Activated CD4-positive, alpha-beta memory T cell treated with anti-CD3 and anti-CD28 coated beads for 36 hours (primary cell): ENCODE measurements at regions of chr2 and their contacts with region 1.

Region 1: GRCh38 chr2:55718165-55719008 is 24.7 kb upstream of the PNPT1 start:
- DNase-seq: peak; percentile 45
- H3K4me3 Mint-ChIP-seq: no peak overlapping the region
- H3K27ac Mint-ChIP-seq: no peak overlapping the region
- H3K4me1 Mint-ChIP-seq: no peaks in the 10 kb centered on the region
- H3K27me3 Mint-ChIP-seq: no peaks in the 10 kb centered on the region

Region 2: DNA sequence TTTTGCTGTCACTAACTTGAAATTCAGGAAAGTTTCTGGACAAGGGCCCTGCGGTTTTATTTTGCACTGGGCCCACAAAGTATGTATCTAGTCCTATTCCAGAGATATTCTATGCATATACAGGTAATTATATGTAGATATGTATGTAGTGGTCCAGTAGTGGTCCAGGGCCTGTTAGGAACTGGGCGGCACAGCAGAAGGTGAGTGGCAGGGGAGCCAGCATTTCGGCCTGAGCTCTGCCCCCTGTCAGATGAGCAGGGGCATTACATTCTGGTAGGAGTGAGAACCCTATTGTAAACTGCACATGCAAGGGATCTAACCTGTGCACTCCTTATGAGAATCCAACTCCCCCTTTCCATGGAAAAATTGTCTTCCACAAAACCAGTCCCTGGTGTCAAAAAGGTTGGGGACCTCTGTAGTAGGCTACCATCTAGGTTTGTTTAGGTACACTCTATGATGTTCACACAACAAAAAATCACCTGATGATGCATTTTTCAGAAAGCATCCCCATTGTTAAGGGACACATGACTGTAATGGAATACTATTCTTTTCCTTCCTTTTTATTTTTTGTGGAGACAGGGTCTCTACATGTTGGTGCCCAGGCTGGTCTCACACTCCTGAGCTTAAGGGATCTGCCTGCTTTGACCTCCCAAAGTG is 98.1 kb before region 1 on chr2:
- CTCF ChIA-PET with region 1: no interaction called
- POLR2A ChIA-PET with region 1: no interaction called
- intact Hi-C with region 1: no loop called
- DNase-seq: peak; percentile 32
- H3K4me3 Mint-ChIP-seq: peak overlapping the region; percentile 54
- H3K27ac Mint-ChIP-seq: no peak overlapping the region
- H3K4me1 Mint-ChIP-seq: peaks cover 50% of the 10 kb centered on the region
- H3K27me3 Mint-ChIP-seq: no peaks in the 10 kb centered on the region

Region 3: GRCh38 chr2:55827467-55828254 is 109.3 kb after region 1 on chr2:
- CTCF ChIA-PET with region 1: no interaction called
- POLR2A ChIA-PET with region 1: no interaction called
- intact Hi-C with region 1: no loop called
- DNase-seq: no peak
- H3K4me3 Mint-ChIP-seq: no peak overlapping the region
- H3K27ac Mint-ChIP-seq: no peak overlapping the region
- H3K4me1 Mint-ChIP-seq: no peaks in the 10 kb centered on the region
- H3K27me3 Mint-ChIP-seq: no peaks in the 10 kb centered on the region

Region 4: DNA sequence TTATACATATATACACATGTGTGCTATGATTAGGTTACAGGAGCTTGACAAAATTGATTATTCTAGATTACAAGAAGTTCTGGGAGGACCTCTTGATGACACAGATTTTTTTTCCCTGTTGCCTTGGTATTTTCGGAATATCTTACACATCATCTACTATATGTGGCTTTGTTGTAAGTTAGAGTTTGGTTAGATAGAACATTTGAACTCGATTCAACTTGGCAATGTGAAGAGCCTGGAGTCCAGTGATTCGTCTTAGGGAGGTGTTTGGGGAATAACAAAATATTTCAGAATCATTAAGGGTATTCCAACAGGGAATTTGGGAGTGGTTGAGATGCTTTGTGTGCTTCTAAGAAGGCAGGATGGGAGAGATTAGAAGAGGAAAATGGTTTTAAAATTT is 244.5 kb after region 1 on chr2:
- CTCF ChIA-PET with region 1: interaction called, 5 read pairs
- POLR2A ChIA-PET with region 1: no interaction called
- intact Hi-C with region 1: loop called (anchors 1 kb)
- DNase-seq: no peak
- H3K4me3 Mint-ChIP-seq: no peak overlapping the region
- H3K27ac Mint-ChIP-seq: no peak overlapping the region
- H3K4me1 Mint-ChIP-seq: no peaks in the 10 kb centered on the region
- H3K27me3 Mint-ChIP-seq: peaks cover 2% of the 10 kb centered on the region

Region 5: DNA sequence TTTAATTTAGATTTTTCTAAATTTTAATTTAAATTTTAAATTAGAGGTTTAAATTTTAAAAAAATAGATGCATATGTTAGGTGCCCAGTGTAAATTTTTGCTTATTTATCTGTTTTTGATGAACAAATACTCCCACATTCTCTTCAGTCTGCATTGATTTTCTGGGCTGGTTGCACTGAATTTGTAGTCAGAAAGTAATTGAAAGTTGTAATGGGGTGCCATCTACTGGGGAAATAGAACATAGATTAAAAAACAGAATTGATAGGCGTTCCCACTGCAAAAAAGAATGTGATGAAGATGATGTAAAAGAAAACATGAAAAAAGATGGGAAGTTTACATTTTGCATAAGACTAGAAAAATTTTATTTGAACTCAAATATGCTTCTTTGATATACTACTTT is 413.8 kb after region 1 on chr2:
- CTCF ChIA-PET with region 1: no interaction called
- POLR2A ChIA-PET with region 1: no interaction called
- intact Hi-C with region 1: loop called (anchors 1 kb)
- DNase-seq: no peak
- H3K4me3 Mint-ChIP-seq: no peak overlapping the region
- H3K27ac Mint-ChIP-seq: no peak overlapping the region
- H3K4me1 Mint-ChIP-seq: no peaks in the 10 kb centered on the region
- H3K27me3 Mint-ChIP-seq: no peaks in the 10 kb centered on the region

Region 6: GRCh38 chr2:57516698-57517340 is 1798.4 kb after region 1 on chr2:
- CTCF ChIA-PET with region 1: interaction called, 4 read pairs
- POLR2A ChIA-PET with region 1: no interaction called
- intact Hi-C with region 1: loop called (anchors 2 kb)
- DNase-seq: no peak
- H3K4me3 Mint-ChIP-seq: no peak overlapping the region
- H3K27ac Mint-ChIP-seq: no peak overlapping the region
- H3K4me1 Mint-ChIP-seq: no peaks in the 10 kb centered on the region
- H3K27me3 Mint-ChIP-seq: no peaks in the 10 kb centered on the region